WTC11 (cell line): ENCODE measurements at regions of chr3 and their contacts with region 1.

Region 1: GRCh38 chr3:51099794-51100535 is 285.1 kb upstream of the MANF start:
- DNase-seq: peak; percentile 69
- ATAC-seq: peak; percentile 95
- H3K4me3 Mint-ChIP-seq: no peak overlapping the region
- H3K27ac Mint-ChIP-seq: no peak overlapping the region
- H3K4me1 Mint-ChIP-seq: peaks cover 11% of the 10 kb centered on the region
- H3K27me3 Mint-ChIP-seq: peaks cover 33% of the 10 kb centered on the region
- CTCF ChIP-seq: peak; percentile 50; the same call in 1 of the 2 replicates

Region 2: GRCh38 chr3:50971487-50971924 is 128.5 kb before region 1 on chr3:
- CTCF ChIA-PET with region 1: interaction called, 22 read pairs
- POLR2A ChIA-PET with region 1: interaction called, 3 read pairs
- DNase-seq: peak; percentile 48
- ATAC-seq: peak; percentile 98
- H3K4me3 Mint-ChIP-seq: no peak overlapping the region
- H3K27ac Mint-ChIP-seq: no peak overlapping the region; the same call in 1 of the 2 replicates
- H3K4me1 Mint-ChIP-seq: peaks cover 11% of the 10 kb centered on the region
- H3K27me3 Mint-ChIP-seq: no peaks in the 10 kb centered on the region
- CTCF ChIP-seq: peak; percentile 90

Region 3: DNA sequence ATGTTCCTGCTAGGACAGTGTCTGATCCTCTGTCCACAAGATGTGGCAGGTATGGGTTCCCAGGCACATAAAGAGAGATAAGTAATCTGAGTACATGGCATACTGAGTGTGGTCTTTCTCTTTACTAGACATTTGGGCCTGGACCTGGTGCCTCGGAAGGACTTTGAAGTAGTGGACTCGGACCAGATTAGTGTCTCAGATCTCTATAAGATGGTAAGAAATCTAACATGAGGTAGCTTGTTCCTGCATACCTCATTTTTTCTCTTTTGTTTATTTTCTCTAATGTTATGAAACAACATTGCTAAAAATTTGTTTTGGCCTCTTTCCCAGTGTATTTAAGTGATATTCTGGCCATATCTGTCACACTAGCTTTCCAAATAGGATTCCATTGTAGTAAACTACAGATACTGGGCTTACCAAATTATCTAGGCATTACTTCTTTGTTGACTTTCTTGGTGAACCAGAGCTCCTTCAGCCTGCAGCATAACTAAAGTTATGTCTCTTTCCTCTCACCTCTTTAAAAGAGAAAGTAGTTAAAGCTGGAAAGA is 24.7 kb before region 1 on chr3:
- CTCF ChIA-PET with region 1: interaction called, 10 read pairs
- POLR2A ChIA-PET with region 1: interaction called, 3 read pairs
- DNase-seq: no peak
- ATAC-seq: no peak
- H3K4me3 Mint-ChIP-seq: no peak overlapping the region
- H3K27ac Mint-ChIP-seq: no peak overlapping the region
- H3K4me1 Mint-ChIP-seq: no peaks in the 10 kb centered on the region
- H3K27me3 Mint-ChIP-seq: no peaks in the 10 kb centered on the region
- CTCF ChIP-seq: no peak

Region 4: GRCh38 chr3:51110586-51110985 is 10.6 kb after region 1 on chr3:
- CTCF ChIA-PET with region 1: interaction called, 11 read pairs
- POLR2A ChIA-PET with region 1: no interaction called
- DNase-seq: no peak
- ATAC-seq: no peak
- H3K4me3 Mint-ChIP-seq: no peak overlapping the region
- H3K27ac Mint-ChIP-seq: no peak overlapping the region
- H3K4me1 Mint-ChIP-seq: no peaks in the 10 kb centered on the region
- H3K27me3 Mint-ChIP-seq: peaks cover 13% of the 10 kb centered on the region
- CTCF ChIP-seq: no peak

Region 5: DNA sequence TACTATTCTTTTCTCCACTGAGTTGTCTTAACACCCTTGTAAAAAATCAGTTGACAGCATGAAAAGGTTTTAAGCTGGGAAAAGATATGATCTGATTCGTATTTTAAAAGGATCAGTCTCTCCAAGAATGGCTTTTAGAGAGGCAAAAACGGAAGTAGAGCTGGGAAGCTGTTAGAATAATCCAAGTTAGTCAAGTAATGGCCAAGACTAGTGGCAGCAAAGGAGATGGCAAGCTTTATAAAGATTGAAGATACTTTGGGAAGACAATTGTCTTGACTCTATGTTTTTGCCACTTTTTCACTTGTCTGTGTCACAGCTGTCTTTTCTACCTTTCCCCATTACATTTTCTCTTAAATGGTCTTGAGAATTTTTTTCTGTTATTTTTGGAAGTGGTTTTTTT is 41.6 kb after region 1 on chr3:
- CTCF ChIA-PET with region 1: interaction called, 13 read pairs
- POLR2A ChIA-PET with region 1: no interaction called
- DNase-seq: no peak
- ATAC-seq: no peak
- H3K4me3 Mint-ChIP-seq: no peak overlapping the region
- H3K27ac Mint-ChIP-seq: no peak overlapping the region
- H3K4me1 Mint-ChIP-seq: no peaks in the 10 kb centered on the region
- H3K27me3 Mint-ChIP-seq: no peaks in the 10 kb centered on the region
- CTCF ChIP-seq: no peak

Region 6: DNA sequence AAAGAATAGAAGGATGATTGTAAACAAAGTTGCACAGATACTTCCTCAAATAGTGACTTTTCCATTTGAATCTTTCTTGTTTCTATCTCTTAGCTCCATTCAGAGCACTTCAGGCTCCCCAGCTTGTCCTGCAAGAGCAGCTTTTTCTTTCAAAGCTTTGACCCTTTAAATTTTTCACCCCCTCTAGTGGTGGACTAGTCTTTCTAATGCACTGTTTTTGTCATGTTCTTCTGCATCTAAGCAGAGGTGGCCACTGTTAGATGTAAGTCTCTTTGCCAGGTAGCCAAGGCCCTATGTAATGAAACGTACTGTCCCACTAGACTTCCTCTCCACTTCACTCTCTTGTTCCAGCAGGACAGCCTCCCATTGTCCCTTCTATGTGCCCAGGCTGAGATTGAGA is 211.1 kb after region 1 on chr3:
- CTCF ChIA-PET with region 1: interaction called, 22 read pairs
- POLR2A ChIA-PET with region 1: no interaction called
- DNase-seq: no peak
- ATAC-seq: peak; percentile 51
- H3K4me3 Mint-ChIP-seq: no peak overlapping the region
- H3K27ac Mint-ChIP-seq: no peak overlapping the region
- H3K4me1 Mint-ChIP-seq: no peaks in the 10 kb centered on the region
- H3K27me3 Mint-ChIP-seq: no peaks in the 10 kb centered on the region
- CTCF ChIP-seq: no peak

Region 7: DNA sequence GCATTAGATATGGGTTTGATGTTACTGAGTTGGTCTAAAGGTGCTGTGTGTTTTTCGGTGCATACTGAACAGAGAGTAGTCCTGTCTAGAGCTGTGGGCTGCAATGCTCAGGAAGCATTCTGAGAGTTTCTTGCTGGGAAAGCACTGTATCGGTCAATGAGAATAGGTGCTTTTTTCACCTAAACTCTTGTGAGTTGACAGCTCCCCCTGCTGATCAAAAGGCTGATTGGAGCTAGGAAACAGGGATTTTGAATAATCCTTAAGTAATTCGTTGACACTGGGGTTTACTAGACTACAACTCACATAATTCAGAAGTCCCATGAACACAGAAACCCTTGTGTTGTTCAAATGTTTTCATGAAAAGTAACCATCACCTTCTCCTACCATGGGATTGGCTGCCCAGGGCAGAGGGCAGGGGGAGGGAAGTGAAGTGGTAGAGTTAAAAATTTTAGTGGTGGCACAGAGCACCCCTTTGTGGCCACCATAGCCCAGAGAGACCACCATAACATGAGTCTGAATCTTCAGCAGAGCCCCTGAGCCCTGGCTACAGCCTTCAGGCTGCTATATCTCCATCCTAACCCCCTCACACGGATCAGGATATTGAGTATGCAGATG is 272.1 kb after region 1 on chr3:
- CTCF ChIA-PET with region 1: interaction called, 40 read pairs
- POLR2A ChIA-PET with region 1: no interaction called
- DNase-seq: peak; percentile 67
- ATAC-seq: peak; percentile 89
- H3K4me3 Mint-ChIP-seq: no peak overlapping the region
- H3K27ac Mint-ChIP-seq: no peak overlapping the region
- H3K4me1 Mint-ChIP-seq: no peaks in the 10 kb centered on the region
- H3K27me3 Mint-ChIP-seq: no peaks in the 10 kb centered on the region
- CTCF ChIP-seq: peak; percentile 25; the same call in 1 of the 2 replicates